ENCODE measurements at regions of chr3 and their contacts with region 1.

Region 1: GRCh38 chr3:195001961-195002861 is 268.7 kb downstream of the XXYLT1 start:
- DNase-seq: peak; percentile 71
- H3K4me3 Mint-ChIP-seq: no peak overlapping the region
- H3K27ac Mint-ChIP-seq: no peak overlapping the region
- H3K4me1 Mint-ChIP-seq: peaks cover 6% of the 10 kb centered on the region
- H3K27me3 Mint-ChIP-seq: peaks cover 25% of the 10 kb centered on the region
- CTCF ChIP-seq: no peak

Region 2: GRCh38 chr3:195259475-195260279 is 257.5 kb after region 1 on chr3:
- CTCF ChIA-PET with region 1: no interaction called
- POLR2A ChIA-PET with region 1: no interaction called
- intact Hi-C with region 1: loop called (anchors 5 kb)
- DNase-seq: peak; percentile 94
- H3K4me3 Mint-ChIP-seq: peak overlapping the region; percentile 67
- H3K27ac Mint-ChIP-seq: no peak overlapping the region
- H3K4me1 Mint-ChIP-seq: peaks cover 11% of the 10 kb centered on the region
- H3K27me3 Mint-ChIP-seq: no peaks in the 10 kb centered on the region
- CTCF ChIP-seq: peak; percentile 86